Natural killer cell (primary cell): ENCODE measurements at regions of chr2 and their contacts with region 1.

Region 1: GRCh38 chr2:134668821-134669220 is 50.0 kb downstream of the TMEM163 start:
- DNase-seq: peak; percentile 83 to 92
- ATAC-seq: peak; percentile 65 to 81 (median 79)
- H3K4me3 ChIP-seq: no peak overlapping the region
- H3K4me3 Mint-ChIP-seq: peak overlapping the region; percentile 78
- H3K27ac ChIP-seq: no peak overlapping the region
- H3K27ac Mint-ChIP-seq: peak overlapping the region; percentile 93 to 98
- H3K4me1 ChIP-seq: peaks cover 89% of the 10 kb centered on the region
- H3K4me1 Mint-ChIP-seq: peaks cover 96 to 100% of the 10 kb centered on the region in 2 donors
- H3K27me3 ChIP-seq: no peaks in the 10 kb centered on the region
- H3K27me3 Mint-ChIP-seq: no peaks in the 10 kb centered on the region
- CTCF ChIP-seq: no peak

Region 2: DNA sequence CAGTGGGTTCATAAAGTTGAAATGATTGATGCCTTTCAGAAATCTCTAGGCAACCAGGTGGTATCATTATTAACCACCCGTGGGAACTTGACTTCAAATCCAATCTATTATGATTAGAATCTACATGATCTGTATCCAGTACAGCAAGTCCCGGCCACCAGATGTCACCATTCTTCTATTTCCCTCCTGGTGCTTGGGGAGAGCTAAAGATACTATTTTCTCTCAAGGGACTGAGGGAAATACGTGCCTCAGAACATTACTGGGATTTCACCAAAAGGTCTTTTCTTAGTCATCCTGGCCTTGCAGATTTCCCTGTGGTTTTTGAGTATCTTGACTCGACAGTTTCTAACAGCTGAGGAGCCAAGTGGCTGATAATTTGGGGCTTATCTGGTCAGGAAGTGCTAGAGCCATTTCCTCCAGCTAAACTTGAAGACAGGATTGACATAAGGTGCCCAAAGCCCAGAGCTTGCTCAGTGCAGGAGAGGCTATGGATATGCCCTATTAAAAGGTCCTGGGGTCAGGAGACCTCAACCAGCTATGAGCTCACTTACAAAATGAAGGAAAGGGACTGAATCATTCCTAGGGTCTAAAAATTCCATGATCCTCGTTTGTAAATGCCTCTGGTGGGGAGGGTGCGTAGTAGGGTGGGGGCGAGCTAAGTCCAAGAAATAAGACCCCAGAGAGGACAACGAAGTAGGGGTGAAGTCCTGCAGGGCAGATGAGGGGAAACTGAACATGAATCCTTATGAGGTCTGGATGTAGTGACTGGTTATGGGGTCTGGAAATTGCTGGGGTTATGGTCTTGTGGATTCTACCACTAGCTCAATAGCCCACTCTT is 550.3 kb before region 1 on chr2:
- intact Hi-C with region 1: loop called (anchors 10 kb)
- DNase-seq: peak; percentile 60 to 91
- ATAC-seq: peak; percentile 43 to 65 (median 51)
- H3K4me3 ChIP-seq: no peak overlapping the region
- H3K4me3 Mint-ChIP-seq: peak overlapping the region; percentile 100
- H3K27ac ChIP-seq: no peak overlapping the region
- H3K27ac Mint-ChIP-seq: peak overlapping the region; percentile 89 to 94
- H3K4me1 ChIP-seq: peaks cover 34% of the 10 kb centered on the region
- H3K4me1 Mint-ChIP-seq: peaks cover 37 to 39% of the 10 kb centered on the region in 2 donors
- H3K27me3 ChIP-seq: no peaks in the 10 kb centered on the region
- H3K27me3 Mint-ChIP-seq: peaks cover 0 to 24% of the 10 kb centered on the region in 2 donors
- CTCF ChIP-seq: peak; percentile 73

Region 3: GRCh38 chr2:134679745-134680144 is 10.9 kb after region 1 on chr2:
- intact Hi-C with region 1: loop called (anchors 1 kb)
- DNase-seq: peak in 1 of 2 donors; percentile 81
- ATAC-seq: peak; percentile 61 to 80 (median 68)
- H3K4me3 ChIP-seq: no peak overlapping the region
- H3K4me3 Mint-ChIP-seq: peak overlapping the region; percentile 84
- H3K27ac ChIP-seq: peak overlapping the region; percentile 54
- H3K27ac Mint-ChIP-seq: peak overlapping the region; percentile 81 to 90
- H3K4me1 ChIP-seq: peaks cover 57% of the 10 kb centered on the region
- H3K4me1 Mint-ChIP-seq: peaks cover 78 to 91% of the 10 kb centered on the region in 2 donors
- H3K27me3 ChIP-seq: no peaks in the 10 kb centered on the region
- H3K27me3 Mint-ChIP-seq: no peaks in the 10 kb centered on the region
- CTCF ChIP-seq: no peak

Region 4: GRCh38 chr2:134717286-134718022 is 48.6 kb after region 1 on chr2:
- intact Hi-C with region 1: loop called (anchors 2 kb)
- DNase-seq: no peak
- ATAC-seq: no peak
- H3K4me3 ChIP-seq: no peak overlapping the region
- H3K4me3 Mint-ChIP-seq: peak overlapping the region; percentile 89
- H3K27ac ChIP-seq: no peak overlapping the region
- H3K27ac Mint-ChIP-seq: peak overlapping the region; percentile 35 to 82
- H3K4me1 ChIP-seq: peaks cover 37% of the 10 kb centered on the region
- H3K4me1 Mint-ChIP-seq: peaks cover 44 to 55% of the 10 kb centered on the region in 2 donors
- H3K27me3 ChIP-seq: peaks cover 16% of the 10 kb centered on the region
- H3K27me3 Mint-ChIP-seq: peaks cover 29 to 43% of the 10 kb centered on the region in 2 donors
- CTCF ChIP-seq: no peak

Region 5: GRCh38 chr2:135052042-135052876 is 383.4 kb after region 1 on chr2 and contains the start of gene RAB3GAP1:
- intact Hi-C with region 1: loop called (anchors 2 kb)
- DNase-seq: peak; percentile 85 to 96
- ATAC-seq: peak; percentile 82 to 92 (median 90)
- H3K4me3 ChIP-seq: peak within 1 kb of the TSS; percentile 58
- H3K4me3 Mint-ChIP-seq: peak within 1 kb of the TSS; percentile 97
- H3K27ac ChIP-seq: peak within 1 kb of the TSS; percentile 90
- H3K27ac Mint-ChIP-seq: peak within 1 kb of the TSS; percentile 96 to 98
- H3K4me1 ChIP-seq: peaks cover 7% of the 10 kb centered on the region
- H3K4me1 Mint-ChIP-seq: peaks cover 20 to 29% of the 10 kb centered on the region in 2 donors
- H3K27me3 ChIP-seq: peaks cover 13% of the 10 kb centered on the region
- H3K27me3 Mint-ChIP-seq: peaks cover 42 to 53% of the 10 kb centered on the region in 2 donors
- CTCF ChIP-seq: no peak
- total RNA-seq, gene RAB3GAP1: 9.6 to 12.6 (median 9.8) TPM